CD4-positive, alpha-beta memory T cell (primary cell): ENCODE measurements at regions of chr12 and their contacts with region 1.

Region 1: DNA sequence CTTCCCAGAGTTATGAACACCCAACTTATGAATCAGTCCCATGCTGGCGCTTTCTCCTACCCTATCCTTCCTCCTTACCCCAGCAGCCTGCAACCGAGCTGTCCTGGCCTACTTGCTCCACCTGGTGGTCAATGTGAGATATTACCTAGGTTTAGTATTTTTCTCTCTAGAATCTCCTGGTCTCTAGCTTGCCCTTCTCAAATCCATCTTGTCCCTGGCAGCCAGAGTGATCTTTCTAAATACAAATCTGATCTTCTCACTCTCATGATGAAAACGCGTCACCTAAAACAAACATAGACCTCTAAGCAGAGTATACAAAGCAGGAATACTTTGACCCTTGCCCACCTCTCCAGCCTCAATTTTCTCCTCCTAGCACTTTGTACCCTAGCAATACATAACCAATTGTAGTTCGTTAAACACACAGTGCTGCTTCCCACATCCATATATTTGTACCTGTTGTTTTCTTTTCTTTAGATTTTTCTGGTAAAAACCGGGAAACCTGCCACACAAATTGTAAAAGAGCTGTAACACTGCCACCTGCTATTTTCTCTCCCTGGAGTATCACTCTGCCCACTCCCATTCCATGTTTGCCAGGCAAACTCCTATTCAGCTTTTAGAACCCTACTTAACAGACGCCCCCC is 20.0 kb upstream of the TCP11L2 start:
- DNase-seq: peak; percentile 41 to 60 (median 59)
- H3K4me3 ChIP-seq: no peak overlapping the region
- H3K4me3 Mint-ChIP-seq: no peak overlapping the region
- H3K27ac ChIP-seq: no peak overlapping the region
- H3K27ac Mint-ChIP-seq: peak overlapping the region in 4 of 7 donors; percentile 19 to 76 (median 28)
- H3K4me1 ChIP-seq: no peaks in the 10 kb centered on the region
- H3K4me1 Mint-ChIP-seq: peaks cover 0 to 5% (median 2%) of the 10 kb centered on the region in 4 donors
- H3K27me3 ChIP-seq: no peaks in the 10 kb centered on the region
- H3K27me3 Mint-ChIP-seq: peaks cover 0 to 11% of the 10 kb centered on the region in 2 donors

Region 2: GRCh38 chr12:105814283-105814682 is 468.3 kb before region 1 on chr12:
- CTCF ChIA-PET with region 1: no interaction called
- POLR2A ChIA-PET with region 1: no interaction called
- intact Hi-C with region 1: no loop called
- DNase-seq: no peak
- H3K4me3 ChIP-seq: no peak overlapping the region
- H3K4me3 Mint-ChIP-seq: no peak overlapping the region
- H3K27ac ChIP-seq: no peak overlapping the region
- H3K27ac Mint-ChIP-seq: no peak overlapping the region
- H3K4me1 ChIP-seq: no peaks in the 10 kb centered on the region
- H3K4me1 Mint-ChIP-seq: no peaks in the 10 kb centered on the region
- H3K27me3 ChIP-seq: no peaks in the 10 kb centered on the region
- H3K27me3 Mint-ChIP-seq: peaks cover 0 to 2% of the 10 kb centered on the region in 2 donors

Region 3: GRCh38 chr12:106247674-106248311 is 34.8 kb before region 1 on chr12 and contains the start of gene CKAP4:
- CTCF ChIA-PET with region 1: interaction called, 6 read pairs
- POLR2A ChIA-PET with region 1: interaction called, 7 read pairs
- intact Hi-C with region 1: loop called (anchors 1 kb)
- DNase-seq: peak; percentile 56 to 65 (median 64)
- H3K4me3 ChIP-seq: peak within 1 kb of the TSS; percentile 32 to 54
- H3K4me3 Mint-ChIP-seq: peak within 1 kb of the TSS; percentile 83 to 90 (median 87)
- H3K27ac ChIP-seq: peak within 1 kb of the TSS; percentile 74
- H3K27ac Mint-ChIP-seq: peak within 1 kb of the TSS; percentile 80 to 98 (median 96)
- H3K4me1 ChIP-seq: peaks cover 34% of the 10 kb centered on the region
- H3K4me1 Mint-ChIP-seq: peaks cover 9 to 43% (median 30%) of the 10 kb centered on the region in 4 donors
- H3K27me3 ChIP-seq: no peaks in the 10 kb centered on the region
- H3K27me3 Mint-ChIP-seq: no peaks in the 10 kb centered on the region
- total RNA-seq, gene CKAP4: 12.5 to 13.0 TPM

Region 4: DNA sequence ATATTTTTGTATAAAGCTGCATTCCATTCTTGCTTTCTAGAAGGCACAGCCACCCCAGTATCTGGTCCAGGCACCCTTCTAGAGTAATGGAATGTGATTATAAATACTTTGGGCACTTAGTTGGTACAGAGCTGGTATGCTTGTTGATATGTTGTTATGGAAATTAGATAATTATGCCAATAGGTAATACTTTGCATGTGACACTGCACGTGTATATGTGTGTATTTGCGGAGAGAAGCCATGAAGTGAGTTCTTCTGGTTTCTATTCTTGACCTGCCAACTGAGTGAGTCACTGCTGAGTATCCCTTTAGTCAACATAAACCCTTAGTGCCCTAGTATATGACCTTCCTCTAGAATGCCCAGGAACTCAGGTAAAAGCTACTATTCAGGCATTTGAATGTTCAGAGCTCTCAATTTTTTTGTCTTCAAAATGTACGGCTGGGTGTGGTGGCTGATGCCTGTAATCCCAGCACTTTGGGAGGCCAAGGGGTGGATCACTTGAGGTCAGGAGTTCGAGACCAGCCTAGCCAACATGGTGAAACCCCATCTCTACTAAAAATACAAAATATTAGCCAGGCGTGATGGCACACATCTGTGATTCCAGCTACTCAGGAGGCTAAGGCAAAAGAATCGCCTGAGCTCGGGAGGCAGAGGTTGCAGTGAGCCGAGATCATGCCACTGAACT is 13.8 kb after region 1 on chr12:
- CTCF ChIA-PET with region 1: interaction called, 37 read pairs
- POLR2A ChIA-PET with region 1: interaction called, 100 read pairs
- intact Hi-C with region 1: loop called (anchors 1 kb)
- DNase-seq: no peak
- H3K4me3 ChIP-seq: no peak overlapping the region
- H3K4me3 Mint-ChIP-seq: no peak overlapping the region
- H3K27ac ChIP-seq: no peak overlapping the region
- H3K27ac Mint-ChIP-seq: no peak overlapping the region
- H3K4me1 ChIP-seq: peaks cover 16% of the 10 kb centered on the region
- H3K4me1 Mint-ChIP-seq: peaks cover 9 to 19% (median 16%) of the 10 kb centered on the region in 4 donors
- H3K27me3 ChIP-seq: no peaks in the 10 kb centered on the region
- H3K27me3 Mint-ChIP-seq: no peaks in the 10 kb centered on the region